Naive thymus-derived CD8-positive, alpha-beta T cell (primary cell): ENCODE measurements at regions of chr7 and their contacts with region 1.

Region 1: DNA sequence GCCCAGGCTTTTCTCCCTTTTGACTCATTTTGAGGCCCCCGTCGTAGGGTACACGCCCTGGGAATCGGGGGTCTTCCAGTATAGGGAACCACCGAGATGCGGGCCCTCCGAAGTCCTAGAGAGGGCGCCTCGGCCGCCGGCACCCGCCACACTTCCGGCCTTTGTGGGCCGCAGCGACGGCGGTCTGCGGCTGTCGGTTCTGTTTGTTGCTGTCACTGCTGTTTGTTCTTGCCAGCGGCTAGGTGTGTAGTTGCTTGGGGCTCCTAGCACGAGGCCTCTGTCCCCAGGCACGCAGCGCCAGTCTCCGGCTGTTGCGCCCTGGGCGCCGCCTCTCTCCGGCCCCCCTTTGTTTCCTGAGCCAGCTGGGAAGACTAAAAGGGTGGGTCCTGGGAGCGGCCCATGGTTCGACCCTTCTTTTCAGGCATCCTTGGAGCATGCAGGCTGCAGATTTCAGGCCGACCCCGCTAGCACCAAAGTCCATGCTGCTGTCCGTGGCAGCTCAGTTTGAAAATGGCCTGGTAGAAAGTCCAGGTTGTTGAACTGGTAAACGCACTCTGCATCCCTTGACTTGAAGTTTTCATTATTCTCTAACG is 17.8 kb upstream of the ZKSCAN1 start:
- DNase-seq: peak; percentile 58 to 87 (median 76)
- ATAC-seq: peak; percentile 98
- H3K4me3 Mint-ChIP-seq: peak overlapping the region; percentile 76 to 89 (median 82)
- H3K27ac Mint-ChIP-seq: peak overlapping the region; percentile 84 to 99 (median 94)
- H3K4me1 Mint-ChIP-seq: peaks cover 9 to 17% (median 14%) of the 10 kb centered on the region in 4 donors
- H3K27me3 Mint-ChIP-seq: peaks cover 0 to 2% (median 0%) of the 10 kb centered on the region in 5 donors

Region 2: DNA sequence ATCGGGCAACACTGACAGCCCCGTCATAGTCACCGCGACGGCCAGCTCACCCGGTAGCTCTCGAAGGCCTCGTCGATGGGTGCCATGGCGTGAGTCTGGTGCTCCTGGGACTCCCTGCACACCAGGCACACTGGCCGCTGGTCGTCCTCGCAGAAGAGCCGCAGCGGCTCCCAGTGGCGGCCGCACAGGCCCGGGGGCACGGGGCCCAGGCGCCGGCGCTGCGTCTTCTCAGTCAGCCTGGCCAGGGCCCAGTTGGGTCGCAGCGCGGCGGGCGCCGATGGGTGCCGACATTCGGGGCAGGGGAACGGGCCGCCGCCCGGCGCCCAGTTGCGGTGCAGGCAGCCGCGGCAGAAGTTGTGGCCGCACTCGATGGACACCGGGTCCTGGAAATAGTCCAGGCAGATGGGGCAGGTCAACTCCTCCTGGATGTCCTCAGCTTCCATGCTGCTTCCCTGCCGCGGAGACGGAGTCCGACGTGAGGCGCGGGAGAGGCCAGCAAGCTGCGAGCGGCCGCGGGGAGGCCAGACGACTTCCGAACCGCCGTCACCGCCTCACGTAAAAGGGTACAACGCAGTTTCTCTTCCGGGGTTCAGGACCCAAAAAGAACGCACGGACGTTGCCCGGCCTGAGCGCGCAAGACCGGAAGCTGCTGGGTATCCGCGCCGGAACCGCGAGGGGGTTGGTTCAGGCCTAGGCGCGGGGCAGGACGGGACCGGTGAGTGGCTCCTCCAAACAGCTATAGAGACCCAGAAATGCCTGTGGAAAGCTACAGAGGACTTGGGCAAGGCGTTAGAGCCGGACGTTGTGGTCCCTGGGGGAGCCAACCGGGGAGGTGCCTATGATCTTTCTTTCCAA is 78.5 kb before region 1 on chr7 and contains the start of gene TRIM4:
- POLR2A ChIA-PET with region 1: interaction called, 23 read pairs
- DNase-seq: peak; percentile 76 to 94 (median 87)
- ATAC-seq: peak; percentile 97 to 98
- H3K4me3 Mint-ChIP-seq: peak within 1 kb of the TSS; percentile 89 to 98 (median 94)
- H3K27ac Mint-ChIP-seq: peak within 1 kb of the TSS; percentile 96 to 99 (median 98)
- H3K4me1 Mint-ChIP-seq: peaks cover 37 to 63% (median 54%) of the 10 kb centered on the region in 4 donors
- H3K27me3 Mint-ChIP-seq: no peaks in the 10 kb centered on the region
- polyA plus RNA-seq, gene TRIM4: 22.2 to 32.2 (median 31.0) TPM

Region 3: DNA sequence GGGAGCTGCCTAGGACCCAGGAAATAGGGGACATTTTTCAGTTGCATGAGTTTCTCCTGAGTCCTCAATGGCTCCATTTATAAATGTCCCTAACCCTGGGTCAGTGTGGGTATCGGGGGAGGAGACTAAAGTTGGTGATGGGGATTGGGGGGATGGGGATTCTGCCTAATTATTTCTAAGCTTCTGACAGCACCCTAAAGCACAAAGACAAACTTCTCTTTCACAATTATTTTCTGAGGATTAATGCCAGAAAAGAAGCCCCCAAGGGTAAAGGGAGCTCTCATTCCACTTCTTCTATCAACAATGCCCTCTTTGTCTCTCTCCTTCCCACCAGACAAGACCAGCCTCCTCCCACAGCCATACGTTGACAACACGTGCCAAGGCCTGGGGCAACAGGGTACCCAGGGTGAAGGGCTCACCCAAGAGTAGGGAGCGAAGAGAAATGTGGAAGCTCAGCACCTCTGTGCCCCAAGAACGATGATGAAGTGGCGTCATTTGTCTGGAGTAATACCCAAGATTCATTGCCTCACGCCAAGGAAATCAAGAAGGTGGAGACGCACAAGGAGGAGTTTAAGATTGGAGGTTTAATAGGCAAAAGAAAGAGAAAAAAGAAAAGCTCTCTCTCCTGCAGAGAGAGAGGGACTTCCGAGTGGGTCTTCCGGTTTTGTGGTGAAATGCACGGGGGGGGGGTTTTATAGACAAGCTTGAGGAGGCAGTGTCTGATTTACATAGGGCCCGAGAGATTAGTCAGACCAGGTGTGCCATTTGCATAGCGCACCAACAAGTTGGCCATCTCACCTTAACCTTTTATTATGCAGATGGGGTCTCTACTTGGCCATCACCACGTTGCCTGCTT is 53.8 kb before region 1 on chr7:
- POLR2A ChIA-PET with region 1: no interaction called
- DNase-seq: no peak
- ATAC-seq: peak in 1 of 2 donors; percentile 12
- H3K4me3 Mint-ChIP-seq: peak overlapping the region; percentile 48 to 87 (median 68)
- H3K27ac Mint-ChIP-seq: peak overlapping the region in 7 of 10 donors; percentile 9 to 86 (median 71)
- H3K4me1 Mint-ChIP-seq: peaks cover 4 to 16% (median 13%) of the 10 kb centered on the region in 4 donors
- H3K27me3 Mint-ChIP-seq: peaks cover 7 to 30% (median 10%) of the 10 kb centered on the region in 5 donors

Region 4: GRCh38 chr7:99985444-99985843 is 12.2 kb before region 1 on chr7:
- POLR2A ChIA-PET with region 1: no interaction called
- DNase-seq: no peak
- ATAC-seq: no peak
- H3K4me3 Mint-ChIP-seq: no peak overlapping the region
- H3K27ac Mint-ChIP-seq: peak overlapping the region in 1 of 10 donors; percentile 37
- H3K4me1 Mint-ChIP-seq: peaks cover 0 to 4% (median 2%) of the 10 kb centered on the region in 4 donors
- H3K27me3 Mint-ChIP-seq: peaks cover 0 to 9% (median 2%) of the 10 kb centered on the region in 5 donors

Region 5: DNA sequence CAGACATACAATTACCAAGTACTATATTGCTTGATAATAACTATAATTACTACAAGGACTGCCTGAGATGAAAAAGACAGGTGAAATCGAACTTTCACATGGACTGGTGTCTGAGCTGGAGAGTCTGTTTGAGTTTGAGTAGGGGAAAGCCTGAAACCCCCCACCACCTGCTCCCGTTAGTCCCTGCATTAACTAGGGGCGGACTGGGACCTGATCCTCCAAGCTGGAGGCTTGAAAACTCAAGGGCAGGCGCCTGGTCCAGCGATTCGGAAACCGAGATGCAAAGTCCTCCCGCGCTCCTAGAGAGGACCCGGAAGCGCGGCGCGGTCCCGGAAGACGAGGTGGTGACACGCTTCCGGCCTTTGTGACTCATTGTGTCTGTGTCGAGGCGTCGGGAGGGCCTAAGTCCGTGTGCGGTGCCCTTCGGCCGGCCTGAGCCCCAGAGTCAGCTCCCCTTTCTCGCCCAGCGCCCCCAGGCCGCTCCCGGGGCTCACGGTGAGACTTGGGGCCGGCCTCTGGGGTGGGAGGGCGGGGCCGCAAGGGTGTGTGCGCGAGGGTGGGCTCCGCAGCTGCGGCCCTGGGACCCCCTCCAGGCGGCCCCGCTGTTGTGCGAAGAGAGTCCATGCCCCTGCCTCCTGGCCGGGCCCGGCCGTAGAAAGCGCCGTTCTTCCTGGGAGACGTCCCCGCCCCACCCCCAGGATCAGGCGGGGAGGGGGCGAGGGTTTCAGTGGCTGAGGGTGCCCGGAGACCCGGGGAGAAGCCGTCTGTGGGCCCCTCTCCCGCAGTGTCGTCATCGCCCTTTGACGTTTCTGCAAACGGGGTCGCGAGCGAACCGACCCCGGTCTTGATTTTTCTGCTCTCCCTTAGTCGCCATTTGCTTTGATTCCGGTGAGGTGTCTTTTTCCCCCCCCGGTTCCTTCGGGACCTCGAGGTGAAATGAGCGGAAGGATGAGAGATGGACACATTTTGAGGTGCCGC is 17.9 kb after region 1 on chr7 and contains the start of gene ZKSCAN1:
- POLR2A ChIA-PET with region 1: interaction called, 16 read pairs
- DNase-seq: peak; percentile 74 to 92 (median 80)
- ATAC-seq: peak; percentile 95 to 97
- H3K4me3 Mint-ChIP-seq: peak within 1 kb of the TSS; percentile 87 to 96 (median 91)
- H3K27ac Mint-ChIP-seq: peak within 1 kb of the TSS; percentile 91 to 99 (median 98)
- H3K4me1 Mint-ChIP-seq: peaks cover 19 to 56% (median 45%) of the 10 kb centered on the region in 4 donors
- H3K27me3 Mint-ChIP-seq: no peaks in the 10 kb centered on the region
- polyA plus RNA-seq, gene ZKSCAN1: 39.1 to 63.6 (median 47.1) TPM